ENCODE measurements at regions of chr9 and their contacts with region 1.

Region 1: GRCh38 chr9:35611230-35611797 is 6.3 kb downstream of the TESK1 start:
- H3K4me3 ChIP-seq: no peak overlapping the region
- H3K27ac ChIP-seq: no peak overlapping the region
- H3K4me1 ChIP-seq: no peaks in the 10 kb centered on the region
- CTCF ChIP-seq: peak; percentile 42; the same call in 1 of the 2 replicates

Region 2: DNA sequence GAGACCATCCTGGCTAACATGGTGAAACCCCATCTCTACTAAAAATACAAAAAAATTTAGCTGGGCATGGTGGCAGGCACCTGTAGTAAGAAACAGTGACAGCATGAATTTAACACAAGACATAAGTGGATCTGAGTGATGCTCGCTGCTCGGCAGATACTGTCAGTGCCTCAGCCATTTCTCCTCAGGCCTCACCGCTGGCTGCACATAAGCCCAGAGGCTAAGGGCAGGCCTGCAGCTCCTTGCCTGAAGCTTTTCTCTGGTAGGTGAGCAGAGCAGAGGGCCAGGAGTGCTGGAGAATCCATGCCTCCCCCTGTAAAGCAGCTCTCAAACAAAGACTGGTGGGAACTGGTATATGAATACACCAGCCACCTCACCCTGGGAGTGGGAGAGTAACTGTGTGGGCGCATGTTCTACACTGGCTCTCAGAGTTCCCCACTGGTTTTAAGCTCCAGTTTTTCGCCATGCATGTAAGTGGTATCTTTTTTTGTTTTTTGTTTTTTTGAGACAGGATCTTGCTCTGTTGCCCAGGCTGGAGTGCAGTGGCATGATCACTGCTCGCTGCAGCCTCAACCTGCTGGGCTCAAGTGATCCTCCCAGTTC is 17.2 kb after region 1 on chr9:
- CTCF ChIA-PET with region 1: interaction called, 22 read pairs
- POLR2A ChIA-PET with region 1: interaction called, 5 read pairs
- H3K4me3 ChIP-seq: no peak overlapping the region
- H3K27ac ChIP-seq: no peak overlapping the region
- H3K4me1 ChIP-seq: no peaks in the 10 kb centered on the region
- CTCF ChIP-seq: no peak

Region 3: DNA sequence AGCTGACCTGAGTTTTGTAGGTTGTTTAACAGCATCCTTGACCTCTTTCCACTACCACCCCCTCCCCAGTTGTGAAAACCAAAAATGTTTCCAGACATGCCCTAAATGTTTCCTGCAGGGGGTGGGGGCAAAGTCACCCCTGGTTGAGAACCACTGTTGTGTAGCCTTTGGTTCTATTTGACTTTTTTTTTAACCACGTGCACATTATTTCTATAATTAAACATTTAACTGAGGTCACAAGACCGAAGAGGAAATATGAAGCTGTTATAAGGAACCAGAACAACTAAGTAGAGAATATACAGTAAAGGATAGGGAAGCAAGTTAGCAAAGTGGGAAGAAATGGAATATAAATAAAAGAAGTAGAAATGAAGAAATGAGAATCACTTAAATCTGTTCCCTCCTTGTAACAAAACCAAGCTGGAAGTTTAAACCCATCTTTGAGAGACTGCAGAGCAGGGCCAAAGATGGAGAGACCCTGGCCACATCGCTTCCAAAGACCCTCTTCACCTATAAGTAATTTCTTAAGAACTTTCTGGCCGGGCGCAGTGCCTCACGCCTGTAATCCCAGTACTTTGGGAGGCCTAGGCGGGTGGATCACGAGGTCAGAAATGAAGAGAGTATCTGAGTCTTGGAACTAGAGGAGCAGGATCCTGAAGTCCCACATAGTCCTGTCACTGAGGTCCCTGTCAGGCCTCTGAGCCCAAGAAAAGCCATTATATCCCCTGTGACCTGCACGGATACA is 25.0 kb after region 1 on chr9:
- CTCF ChIA-PET with region 1: interaction called, 17 read pairs
- POLR2A ChIA-PET with region 1: no interaction called
- H3K4me3 ChIP-seq: no peak overlapping the region
- H3K27ac ChIP-seq: no peak overlapping the region
- H3K4me1 ChIP-seq: no peaks in the 10 kb centered on the region
- CTCF ChIP-seq: no peak

Region 4: GRCh38 chr9:35646533-35647265 is 35.4 kb after region 1 on chr9:
- CTCF ChIA-PET with region 1: interaction called, 22 read pairs
- POLR2A ChIA-PET with region 1: no interaction called
- H3K4me3 ChIP-seq: peak overlapping the region; percentile 62
- H3K27ac ChIP-seq: peak overlapping the region; percentile 51
- H3K4me1 ChIP-seq: no peaks in the 10 kb centered on the region
- CTCF ChIP-seq: peak; percentile 94

Region 5: DNA sequence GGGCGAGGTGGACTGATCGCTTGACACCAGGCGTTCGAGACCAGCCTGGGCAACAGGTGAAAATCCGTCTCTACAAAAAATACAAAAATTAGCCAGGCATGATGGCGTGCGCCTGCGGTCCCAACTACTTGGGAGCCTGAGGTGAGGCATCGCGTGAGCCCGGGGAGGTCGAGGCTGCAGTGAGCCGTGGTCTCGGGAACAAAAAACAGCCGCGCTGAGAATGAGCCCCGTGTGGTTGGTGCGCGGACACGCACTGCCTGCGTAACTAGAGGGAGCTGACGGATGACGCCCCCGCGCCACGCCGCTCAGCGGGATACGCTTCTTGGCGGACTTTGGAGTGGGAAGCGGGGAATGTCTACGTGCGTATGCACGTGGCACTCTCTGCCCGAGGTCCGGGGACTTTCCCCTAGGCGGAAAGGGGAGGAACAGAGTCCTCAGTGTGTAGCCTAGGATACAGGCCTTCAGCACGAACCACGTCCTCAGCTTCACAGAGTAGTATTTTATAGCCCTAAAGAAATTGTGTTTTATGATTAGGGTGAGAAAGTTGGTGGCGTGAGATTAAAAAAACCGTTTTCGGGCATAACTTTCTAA is 46.3 kb after region 1 on chr9 and contains the start of gene RMRP:
- CTCF ChIA-PET with region 1: interaction called, 14 read pairs
- POLR2A ChIA-PET with region 1: interaction called, 4 read pairs
- H3K4me3 ChIP-seq: peak within 1 kb of the TSS; percentile 70
- H3K27ac ChIP-seq: peak within 1 kb of the TSS; percentile 93
- H3K4me1 ChIP-seq: peaks cover 8% of the 10 kb centered on the region; the same call in 1 of the 2 replicates
- CTCF ChIP-seq: peak; percentile 89